ENCODE measurements at regions of chr15 and their contacts with region 1.

Region 1: GRCh38 chr15:91852741-91853510 is 582 bp upstream of the SLCO3A1 start:
- DNase-seq: peak; percentile 82 to 92 (median 84)
- ATAC-seq: peak; percentile 77 to 91 (median 84)
- H3K4me3 ChIP-seq: peak overlapping the region; percentile 42 to 95 (median 80)
- H3K27ac ChIP-seq: peak overlapping the region; percentile 85 to 99 (median 98)
- H3K4me1 ChIP-seq: peaks cover 15 to 67% (median 47%) of the 10 kb centered on the region in 12 donors
- H3K27me3 ChIP-seq: no peaks in the 10 kb centered on the region
- CTCF ChIP-seq: peak; percentile 35 to 84 (median 71)
- POLR2A ChIP-seq: peak in 1 of 2 donors; percentile 31

Region 2: DNA sequence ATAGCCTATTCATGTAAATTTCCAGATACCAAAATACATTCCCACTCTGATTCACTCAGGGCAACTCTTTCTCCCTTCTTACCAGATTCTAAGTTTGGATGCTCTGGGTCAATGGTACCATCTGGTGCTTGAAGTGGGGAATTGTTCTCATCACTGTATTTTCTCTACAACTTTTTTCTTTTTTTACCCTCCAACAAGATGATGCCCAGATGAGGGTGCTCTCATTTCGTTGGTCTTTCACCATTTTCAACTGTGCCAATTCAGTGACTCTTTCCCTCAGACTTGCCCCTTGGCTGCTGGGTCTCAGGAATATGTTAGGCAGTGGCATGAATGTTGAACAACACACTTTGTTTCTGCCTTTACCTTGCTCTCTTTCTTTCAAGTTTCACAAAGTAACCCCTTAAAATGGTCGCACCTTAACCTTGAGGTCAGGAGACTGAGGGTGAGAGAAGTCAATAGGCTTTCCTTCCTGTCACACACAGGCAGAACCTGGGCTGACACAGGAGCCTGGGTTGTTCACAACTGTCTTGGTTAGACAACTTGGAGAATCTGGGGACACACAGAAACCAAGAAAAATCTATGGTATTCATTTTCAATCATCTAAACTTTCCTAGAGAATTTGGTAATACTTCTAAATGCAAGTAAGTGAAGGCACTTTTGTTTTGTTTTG is 330.1 kb before region 1 on chr15:
- intact Hi-C with region 1: loop called in 2 of 10 experiments (anchors 5 to 10 kb)
- DNase-seq: no peak
- ATAC-seq: peak in 3 of 4 donors; percentile 41 to 64 (median 53)
- H3K4me3 ChIP-seq: no peak overlapping the region
- H3K27ac ChIP-seq: no peak overlapping the region
- H3K4me1 ChIP-seq: peaks cover 0 to 12% (median 0%) of the 10 kb centered on the region in 12 donors
- H3K27me3 ChIP-seq: no peaks in the 10 kb centered on the region
- CTCF ChIP-seq: peak in 11 of 12 donors; percentile 7 to 69 (median 34)
- POLR2A ChIP-seq: no peak

Region 3: GRCh38 chr15:91627473-91628278 is 225.2 kb before region 1 on chr15:
- intact Hi-C with region 1: loop called in 1 of 10 experiments (anchors 10 kb)
- DNase-seq: peak; percentile 40 to 77 (median 68)
- ATAC-seq: peak; percentile 87 to 94 (median 92)
- H3K4me3 ChIP-seq: no peak overlapping the region
- H3K27ac ChIP-seq: peak overlapping the region; percentile 39 to 77 (median 69)
- H3K4me1 ChIP-seq: peaks cover 0 to 23% (median 12%) of the 10 kb centered on the region in 12 donors
- H3K27me3 ChIP-seq: no peaks in the 10 kb centered on the region
- CTCF ChIP-seq: no peak
- POLR2A ChIP-seq: no peak

Region 4: DNA sequence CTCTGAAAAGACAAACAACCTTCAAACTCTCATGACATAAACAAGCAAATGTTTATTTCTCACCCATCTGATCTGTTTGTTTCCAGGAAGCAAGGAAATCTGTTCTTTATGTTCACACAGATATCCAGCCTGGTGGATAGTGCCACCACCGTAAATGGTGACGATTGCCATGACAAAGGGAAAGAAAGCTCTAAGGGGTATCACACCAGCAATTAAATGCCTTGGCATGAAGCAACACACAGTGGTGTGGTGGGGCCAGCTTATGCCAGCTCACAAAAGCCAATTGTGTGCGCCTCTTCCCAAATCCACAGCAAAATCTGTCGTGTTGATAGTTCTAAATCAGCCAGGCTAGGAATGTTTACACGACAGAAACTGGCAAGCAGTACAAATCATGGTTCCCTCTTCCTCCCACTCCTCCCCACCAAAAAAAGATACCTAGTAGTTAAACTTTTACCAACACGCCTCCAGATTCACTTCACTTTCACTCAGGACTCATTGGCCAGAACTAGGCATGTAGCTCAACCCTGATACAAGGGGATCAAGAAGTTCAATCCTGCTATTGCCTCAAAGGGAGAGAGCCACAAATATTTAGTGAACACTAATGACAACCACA is 188.6 kb before region 1 on chr15:
- intact Hi-C with region 1: no loop called
- DNase-seq: no peak
- ATAC-seq: no peak
- H3K4me3 ChIP-seq: no peak overlapping the region
- H3K27ac ChIP-seq: no peak overlapping the region
- H3K4me1 ChIP-seq: no peaks in the 10 kb centered on the region
- H3K27me3 ChIP-seq: peaks cover 0 to 13% (median 3%) of the 10 kb centered on the region in 9 donors
- CTCF ChIP-seq: no peak
- POLR2A ChIP-seq: no peak

Region 5: GRCh38 chr15:91867581-91868026 is 14.7 kb after region 1 on chr15:
- intact Hi-C with region 1: loop called in 1 of 10 experiments (anchors 1 kb)
- DNase-seq: peak; percentile 77 to 87 (median 80)
- ATAC-seq: peak; percentile 71 to 88 (median 82)
- H3K4me3 ChIP-seq: peak overlapping the region in 4 of 12 donors; percentile 1 to 17 (median 10)
- H3K27ac ChIP-seq: peak overlapping the region; percentile 69 to 93 (median 85)
- H3K4me1 ChIP-seq: peaks cover 23 to 94% (median 70%) of the 10 kb centered on the region in 12 donors
- H3K27me3 ChIP-seq: no peaks in the 10 kb centered on the region
- CTCF ChIP-seq: no peak
- POLR2A ChIP-seq: no peak

Region 6: GRCh38 chr15:91942676-91943576 is 90.0 kb after region 1 on chr15:
- intact Hi-C with region 1: loop called in 7 of 10 experiments (anchors 2 to 10 kb)
- DNase-seq: peak in 4 of 5 donors; percentile 81 to 87 (median 86)
- ATAC-seq: peak; percentile 71 to 87 (median 86)
- H3K4me3 ChIP-seq: peak overlapping the region in 8 of 12 donors; percentile 1 to 39 (median 23)
- H3K27ac ChIP-seq: peak overlapping the region in 11 of 12 donors; percentile 30 to 86 (median 66)
- H3K4me1 ChIP-seq: peaks cover 12 to 98% (median 83%) of the 10 kb centered on the region in 12 donors
- H3K27me3 ChIP-seq: no peaks in the 10 kb centered on the region
- CTCF ChIP-seq: no peak
- POLR2A ChIP-seq: no peak

Region 7: DNA sequence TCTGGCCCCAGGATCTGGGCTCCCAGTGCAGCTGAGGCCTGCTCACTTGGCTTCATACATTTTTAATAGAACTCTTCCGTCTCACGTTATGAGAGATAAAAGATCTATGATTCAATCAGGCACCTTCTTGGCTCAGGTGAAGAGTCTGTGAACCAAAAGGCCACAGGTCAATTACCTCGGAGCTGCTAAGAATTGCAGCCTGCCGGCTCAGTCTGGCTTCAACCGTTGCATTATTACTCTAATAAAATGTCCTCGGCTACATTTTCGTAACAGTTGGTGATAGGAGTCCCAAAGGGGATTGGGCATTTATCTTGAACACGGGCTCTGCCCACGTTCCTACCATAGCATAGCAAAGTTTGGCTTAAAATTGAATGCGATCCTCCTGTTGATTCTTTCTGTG is 176.8 kb after region 1 on chr15:
- intact Hi-C with region 1: loop called in 1 of 10 experiments (anchors 1 kb)
- DNase-seq: no peak
- ATAC-seq: peak in 2 of 4 donors; percentile 15 to 29
- H3K4me3 ChIP-seq: no peak overlapping the region
- H3K27ac ChIP-seq: peak overlapping the region; percentile 45 to 81 (median 69)
- H3K4me1 ChIP-seq: peaks cover 4 to 88% (median 65%) of the 10 kb centered on the region in 12 donors
- H3K27me3 ChIP-seq: no peaks in the 10 kb centered on the region
- CTCF ChIP-seq: no peak
- POLR2A ChIP-seq: no peak

Region 8: DNA sequence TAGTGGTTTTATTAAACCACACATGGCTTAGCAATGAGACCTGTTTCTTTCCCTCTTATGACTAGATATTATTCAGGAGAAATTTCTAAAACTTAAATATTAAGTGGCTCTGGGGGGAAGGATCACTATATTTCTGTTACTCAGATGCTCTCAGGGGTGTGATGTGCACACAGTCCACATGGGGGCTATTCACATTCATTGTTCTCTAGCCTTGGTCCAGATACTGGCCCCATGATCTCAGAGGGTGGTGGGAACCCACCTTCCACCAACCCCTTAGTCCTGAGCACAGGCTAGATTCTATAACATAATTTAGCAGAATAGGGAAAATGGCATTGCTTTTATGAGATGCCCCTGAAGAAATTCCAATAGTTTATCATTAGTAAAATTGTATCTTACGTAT is 391.8 kb after region 1 on chr15:
- intact Hi-C with region 1: no loop called
- DNase-seq: no peak
- ATAC-seq: no peak
- H3K4me3 ChIP-seq: no peak overlapping the region
- H3K27ac ChIP-seq: no peak overlapping the region
- H3K4me1 ChIP-seq: no peaks in the 10 kb centered on the region
- H3K27me3 ChIP-seq: peaks cover 0 to 9% (median 0%) of the 10 kb centered on the region in 9 donors
- CTCF ChIP-seq: no peak
- POLR2A ChIP-seq: no peak

Measured in heart left ventricle (tissue), 16 donors.